Right ventricle myocardium superior (tissue), 1 donor: ENCODE measurements at regions of chr6 and their contacts with region 1.

Region 1: DNA sequence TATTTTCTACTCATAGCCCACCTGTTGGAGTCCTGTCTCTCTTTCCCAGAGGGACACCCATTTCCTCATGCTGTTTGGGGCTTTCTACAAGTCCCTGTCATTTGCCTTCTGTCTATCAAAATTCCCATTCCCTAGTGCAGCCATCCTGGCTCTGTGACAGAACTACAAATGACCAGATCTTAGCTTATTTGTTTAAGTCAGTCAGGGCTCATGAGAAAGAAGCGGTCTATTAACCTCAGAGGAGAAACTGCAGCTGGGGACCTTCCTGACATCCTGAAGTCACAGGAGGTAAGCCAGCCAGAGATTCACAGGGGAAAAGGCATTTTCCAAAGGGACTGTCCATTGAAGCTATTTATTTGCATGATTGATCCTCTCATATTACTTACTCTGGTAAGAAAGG is 1.7 kb upstream of the COL9A1 start:
- DNase-seq: no peak
- ATAC-seq: no peak

Region 2: GRCh38 chr6:71012866-71013469 is 708.4 kb after region 1 on chr6:
- intact Hi-C with region 1: loop called (anchors 10 kb)
- DNase-seq: no peak
- ATAC-seq: peak; percentile 74